Gastrocnemius medialis (tissue), 4 donors: ENCODE measurements at regions of chr1 and their contacts with region 1.

Region 1: DNA sequence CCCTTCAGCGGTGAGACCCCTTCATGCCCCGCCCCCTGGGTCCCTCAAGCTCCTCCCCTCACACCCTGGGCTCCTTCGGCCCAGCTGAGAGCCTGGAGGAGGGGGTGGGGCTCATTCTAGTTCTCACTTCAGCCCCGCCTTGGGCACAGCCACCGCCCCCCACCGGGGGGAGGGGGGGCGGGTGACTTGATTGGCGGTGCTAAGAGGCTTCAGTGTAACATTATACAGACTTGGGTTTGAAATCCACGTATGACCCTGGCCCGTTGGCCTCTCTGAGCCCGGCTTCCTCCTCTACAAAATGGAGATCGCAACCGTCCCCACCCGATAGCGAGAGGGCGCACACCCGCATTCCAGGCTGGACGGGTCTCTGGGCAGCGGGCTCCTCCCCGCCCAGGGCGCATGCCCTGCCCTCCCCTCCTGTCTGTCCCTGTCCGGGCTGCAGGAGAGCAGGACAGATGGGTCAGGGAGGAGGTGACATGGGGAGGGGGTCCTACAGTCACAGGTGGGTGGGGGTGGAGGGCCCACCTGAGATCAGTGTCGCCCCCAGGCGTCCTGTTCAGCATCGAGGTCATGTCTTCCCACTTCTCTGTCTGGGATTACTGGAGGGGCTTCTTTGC is 5.1 kb downstream of the CLCNKB start:
- DNase-seq: no peak
- ATAC-seq: peak; percentile 17 to 22
- H3K4me3 ChIP-seq: peak overlapping the region; percentile 18 to 45 (median 35)
- H3K27ac ChIP-seq: no peak overlapping the region
- H3K4me1 ChIP-seq: peaks cover 0 to 4% of the 10 kb centered on the region in 2 donors
- H3K27me3 ChIP-seq: no peaks in the 10 kb centered on the region
- CTCF ChIP-seq: no peak
- POLR2A ChIP-seq: no peak

Region 2: GRCh38 chr1:15994590-15995351 is 53.9 kb before region 1 on chr1:
- in situ Hi-C with region 1: loop called in 1 of 4 experiments (anchors 10 kb)
- intact Hi-C with region 1: no loop called
- DNase-seq: peak in 1 of 2 donors; percentile 37
- ATAC-seq: peak; percentile 42 to 54
- H3K4me3 ChIP-seq: no peak overlapping the region
- H3K27ac ChIP-seq: no peak overlapping the region
- H3K4me1 ChIP-seq: no peaks in the 10 kb centered on the region
- H3K27me3 ChIP-seq: no peaks in the 10 kb centered on the region
- CTCF ChIP-seq: peak; percentile 58 to 93 (median 80)
- POLR2A ChIP-seq: no peak

Region 3: GRCh38 chr1:16023769-16024168 is 24.9 kb before region 1 on chr1:
- in situ Hi-C with region 1: no loop called
- intact Hi-C with region 1: loop called (anchors 1 kb)
- DNase-seq: no peak
- ATAC-seq: no peak
- H3K4me3 ChIP-seq: no peak overlapping the region
- H3K27ac ChIP-seq: peak overlapping the region in 3 of 4 donors; percentile 13 to 99 (median 13)
- H3K4me1 ChIP-seq: peaks cover 23 to 27% of the 10 kb centered on the region in 2 donors
- H3K27me3 ChIP-seq: no peaks in the 10 kb centered on the region
- CTCF ChIP-seq: no peak
- POLR2A ChIP-seq: no peak